MCF 10A (cell line): ENCODE measurements at regions of chr3 and their contacts with region 1.

Region 1: GRCh38 chr3:192566706-192567290 is 160.5 kb downstream of the FGF12 start:
- DNase-seq: peak; percentile 74
- H3K4me3 Mint-ChIP-seq: no peak overlapping the region
- H3K27ac Mint-ChIP-seq: no peak overlapping the region
- H3K4me1 Mint-ChIP-seq: no peaks in the 10 kb centered on the region
- H3K27me3 Mint-ChIP-seq: peaks cover 37% of the 10 kb centered on the region
- CTCF ChIP-seq: peak; percentile 78

Region 2: GRCh38 chr3:192645419-192645818 is 78.6 kb after region 1 on chr3:
- CTCF ChIA-PET with region 1: no interaction called
- POLR2A ChIA-PET with region 1: no interaction called
- intact Hi-C with region 1: no loop called
- DNase-seq: no peak
- H3K4me3 Mint-ChIP-seq: no peak overlapping the region
- H3K27ac Mint-ChIP-seq: no peak overlapping the region
- H3K4me1 Mint-ChIP-seq: no peaks in the 10 kb centered on the region
- H3K27me3 Mint-ChIP-seq: peaks cover 72% of the 10 kb centered on the region
- CTCF ChIP-seq: no peak

Region 3: DNA sequence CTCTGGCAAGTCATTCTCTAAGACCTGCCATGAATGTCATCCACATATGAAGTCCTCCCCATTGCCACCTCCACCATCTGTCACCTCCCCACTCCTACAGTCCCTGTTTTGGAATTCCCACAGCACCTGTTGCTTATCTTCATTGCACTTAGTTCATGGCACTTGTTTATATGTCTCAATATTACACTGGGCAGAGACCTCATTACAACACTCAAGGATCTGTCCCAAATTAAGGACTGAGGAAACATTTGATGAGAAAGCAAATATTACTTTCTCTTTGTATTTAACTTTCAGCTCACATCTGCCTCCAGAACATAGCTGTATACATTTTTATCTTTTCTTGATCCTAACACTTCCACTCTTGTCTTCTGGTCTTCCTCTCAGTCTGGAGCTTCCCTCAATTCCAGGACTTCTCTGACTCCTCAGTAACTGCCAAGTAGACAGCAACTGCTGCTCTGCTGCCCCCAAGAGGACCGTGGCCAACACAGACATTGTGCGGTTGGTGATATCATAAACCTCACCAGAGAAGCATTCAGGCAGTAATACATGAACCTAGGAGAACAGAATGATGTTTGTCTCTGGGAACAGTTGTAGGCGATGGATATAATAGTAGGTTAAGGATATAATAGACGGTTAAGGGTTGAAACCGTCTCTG is 205.6 kb after region 1 on chr3:
- CTCF ChIA-PET with region 1: interaction called, 7 read pairs
- POLR2A ChIA-PET with region 1: no interaction called
- intact Hi-C with region 1: loop called (anchors 1 kb)
- DNase-seq: peak; percentile 49
- H3K4me3 Mint-ChIP-seq: no peak overlapping the region
- H3K27ac Mint-ChIP-seq: no peak overlapping the region
- H3K4me1 Mint-ChIP-seq: no peaks in the 10 kb centered on the region
- H3K27me3 Mint-ChIP-seq: peaks cover 26% of the 10 kb centered on the region
- CTCF ChIP-seq: peak; percentile 39

Region 4: GRCh38 chr3:192802957-192803899 is 236.4 kb after region 1 on chr3:
- CTCF ChIA-PET with region 1: interaction called, 137 read pairs
- POLR2A ChIA-PET with region 1: no interaction called
- intact Hi-C with region 1: loop called (anchors 1 kb)
- DNase-seq: peak; percentile 49
- H3K4me3 Mint-ChIP-seq: no peak overlapping the region
- H3K27ac Mint-ChIP-seq: no peak overlapping the region
- H3K4me1 Mint-ChIP-seq: no peaks in the 10 kb centered on the region
- H3K27me3 Mint-ChIP-seq: no peaks in the 10 kb centered on the region
- CTCF ChIP-seq: peak; percentile 44